Ascending aorta (tissue), 2 donors: ENCODE measurements at regions of chr16 and their contacts with region 1.

Region 1: DNA sequence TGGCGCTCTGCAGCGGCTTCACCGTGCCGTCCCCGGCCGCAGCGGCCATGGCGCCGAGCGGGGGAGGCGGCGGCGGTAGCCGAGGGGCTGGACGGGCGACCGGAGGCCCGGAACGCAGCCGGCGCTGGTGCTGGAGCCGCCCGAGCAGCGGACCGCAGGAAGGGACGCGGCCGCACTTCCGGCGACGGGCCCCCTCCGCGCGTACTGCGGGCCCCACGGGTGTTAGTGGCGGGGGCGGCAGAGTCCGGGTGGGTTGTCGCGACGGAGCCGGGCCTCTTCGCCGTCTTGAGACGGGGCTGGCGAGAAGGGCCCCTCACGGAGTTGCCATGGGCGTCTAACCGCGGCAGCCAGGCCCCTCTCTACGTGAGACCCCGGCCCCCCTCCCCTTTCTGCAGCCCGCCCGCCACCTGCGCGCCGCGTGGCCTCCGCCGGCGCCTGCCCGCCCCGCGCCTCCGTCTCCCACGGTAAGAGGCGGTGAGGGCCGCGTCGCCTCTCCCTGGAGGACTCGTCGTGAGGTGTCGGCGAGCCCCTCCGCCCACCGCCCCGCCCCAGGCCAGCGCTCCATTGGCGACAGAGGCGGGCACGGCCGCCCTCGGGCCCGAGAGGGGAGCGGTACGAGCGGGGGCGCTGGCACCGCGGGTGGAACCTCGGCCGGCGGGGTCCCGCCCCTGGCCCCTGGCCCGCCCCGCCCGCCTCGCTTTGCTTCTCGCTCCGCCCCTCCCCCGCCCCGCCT is at the starts of genes VPS9D1 and ZNF276:
- DNase-seq: peak in 1 of 2 donors; percentile 84
- H3K4me3 ChIP-seq: peak within 1 kb of the TSS; percentile 90 to 91
- H3K27ac ChIP-seq: peak within 1 kb of the TSS; percentile 95 to 97
- H3K4me1 ChIP-seq: peaks cover 11 to 19% of the 10 kb centered on the region in 2 donors
- H3K27me3 ChIP-seq: no peaks in the 10 kb centered on the region
- CTCF ChIP-seq: no peak
- total RNA-seq, gene VPS9D1: 17.2 TPM
- total RNA-seq, gene ZNF276: 30.7 TPM

Region 2: DNA sequence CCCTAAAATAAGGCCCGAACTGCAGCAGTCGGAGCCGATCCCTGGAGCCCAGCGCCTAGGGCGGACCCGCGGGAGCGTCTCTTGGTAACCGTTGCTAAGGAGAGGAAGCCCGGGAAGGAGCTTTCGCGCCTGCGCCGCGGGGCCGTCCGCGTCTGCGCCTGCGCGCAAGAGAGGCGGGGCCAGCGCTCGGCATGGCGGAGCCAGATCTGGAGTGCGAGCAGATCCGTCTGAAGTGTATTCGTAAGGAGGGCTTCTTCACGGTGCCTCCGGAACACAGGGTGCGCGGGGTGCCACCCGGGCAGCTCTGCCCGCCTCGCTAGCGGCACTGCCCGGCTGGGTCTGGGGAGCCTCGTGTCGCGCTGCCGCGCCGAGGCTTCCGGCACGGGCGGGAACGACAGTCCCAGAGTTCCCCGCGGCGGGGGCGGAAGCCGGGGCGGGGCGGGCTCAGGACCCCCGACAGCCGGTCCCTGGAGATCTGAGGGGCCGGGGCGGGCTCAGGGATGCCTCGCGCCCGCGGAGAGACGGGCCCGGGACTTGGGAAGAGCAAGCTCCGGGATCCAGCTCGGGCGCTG is 34.4 kb before region 1 on chr16 and contains the start of gene CDK10:
- intact Hi-C with region 1: loop called (anchors 1 kb)
- DNase-seq: peak; percentile 42 to 93
- H3K4me3 ChIP-seq: peak within 1 kb of the TSS; percentile 63 to 80
- H3K27ac ChIP-seq: peak within 1 kb of the TSS; percentile 58 to 82
- H3K4me1 ChIP-seq: peaks cover 4 to 5% of the 10 kb centered on the region in 2 donors
- H3K27me3 ChIP-seq: no peaks in the 10 kb centered on the region
- CTCF ChIP-seq: peak in 1 of 3 experiments; percentile 6
- total RNA-seq, gene CDK10: 141 TPM

Region 3: DNA sequence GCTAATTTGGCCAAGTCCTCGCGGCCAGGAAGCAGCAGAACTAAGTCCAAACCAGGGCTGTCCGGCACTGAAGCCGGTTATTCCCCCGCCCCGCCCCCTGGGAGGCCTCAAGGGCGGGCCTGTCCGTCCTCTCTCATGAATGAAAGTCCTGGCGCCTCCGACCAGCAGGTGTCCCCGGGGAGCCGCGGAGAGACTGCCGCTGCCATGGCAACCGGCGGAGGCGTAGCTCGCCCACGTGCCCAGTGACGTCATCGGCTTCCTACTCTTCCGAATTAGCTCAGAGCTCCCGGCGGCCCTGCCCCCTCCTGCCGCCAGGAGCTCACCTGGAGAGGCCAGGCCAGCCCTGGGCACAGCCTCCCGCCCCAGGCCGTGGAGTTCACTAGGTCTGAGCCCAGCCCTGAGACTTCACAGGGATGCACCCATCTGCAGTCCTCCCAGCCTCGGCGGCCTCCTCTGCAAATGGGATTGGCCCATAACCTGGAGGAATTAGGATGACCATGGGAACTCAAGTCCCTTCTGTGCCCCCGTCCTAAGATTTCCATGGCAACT is 20.8 kb before region 1 on chr16:
- intact Hi-C with region 1: loop called (anchors 1 kb)
- DNase-seq: peak; percentile 96 to 99
- H3K4me3 ChIP-seq: peak overlapping the region; percentile 76 to 77
- H3K27ac ChIP-seq: peak overlapping the region; percentile 88 to 93
- H3K4me1 ChIP-seq: peaks cover 7 to 20% of the 10 kb centered on the region in 2 donors
- H3K27me3 ChIP-seq: no peaks in the 10 kb centered on the region
- CTCF ChIP-seq: peak; percentile 59 to 83 (median 63)